Heart left ventricle (tissue), 16 donors: ENCODE measurements at regions of chr15 and their contacts with region 1.

Region 1: DNA sequence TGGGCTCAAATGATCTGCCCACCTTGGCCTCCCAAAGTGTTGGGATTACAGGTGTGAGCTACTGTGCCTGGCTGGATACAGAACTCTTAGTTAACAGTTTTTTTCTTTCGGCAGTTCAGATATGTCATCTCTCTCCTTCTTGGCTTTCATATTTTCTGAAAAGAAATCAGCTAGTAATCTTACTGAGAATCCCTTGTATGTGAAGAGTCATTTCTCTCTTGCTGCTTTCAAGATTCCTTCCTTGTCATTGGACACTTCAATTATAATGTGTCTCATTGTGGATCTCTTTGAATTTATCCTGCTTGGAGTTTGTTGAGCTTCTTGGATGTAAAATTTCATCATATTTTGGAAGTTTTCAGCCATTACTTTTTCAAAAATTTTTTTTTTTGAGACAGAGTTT is 17.0 kb downstream of the TRIM69 start:
- DNase-seq: no peak
- ATAC-seq: no peak
- H3K4me3 ChIP-seq: no peak overlapping the region
- H3K27ac ChIP-seq: no peak overlapping the region
- H3K4me1 ChIP-seq: no peaks in the 10 kb centered on the region
- H3K27me3 ChIP-seq: no peaks in the 10 kb centered on the region
- CTCF ChIP-seq: no peak
- POLR2A ChIP-seq: no peak

Region 2: GRCh38 chr15:44516436-44516835 is 236.9 kb before region 1 on chr15:
- intact Hi-C with region 1: no loop called
- DNase-seq: no peak
- ATAC-seq: no peak
- H3K4me3 ChIP-seq: no peak overlapping the region
- H3K27ac ChIP-seq: no peak overlapping the region
- H3K4me1 ChIP-seq: no peaks in the 10 kb centered on the region
- H3K27me3 ChIP-seq: no peaks in the 10 kb centered on the region
- CTCF ChIP-seq: no peak
- POLR2A ChIP-seq: no peak

Region 3: DNA sequence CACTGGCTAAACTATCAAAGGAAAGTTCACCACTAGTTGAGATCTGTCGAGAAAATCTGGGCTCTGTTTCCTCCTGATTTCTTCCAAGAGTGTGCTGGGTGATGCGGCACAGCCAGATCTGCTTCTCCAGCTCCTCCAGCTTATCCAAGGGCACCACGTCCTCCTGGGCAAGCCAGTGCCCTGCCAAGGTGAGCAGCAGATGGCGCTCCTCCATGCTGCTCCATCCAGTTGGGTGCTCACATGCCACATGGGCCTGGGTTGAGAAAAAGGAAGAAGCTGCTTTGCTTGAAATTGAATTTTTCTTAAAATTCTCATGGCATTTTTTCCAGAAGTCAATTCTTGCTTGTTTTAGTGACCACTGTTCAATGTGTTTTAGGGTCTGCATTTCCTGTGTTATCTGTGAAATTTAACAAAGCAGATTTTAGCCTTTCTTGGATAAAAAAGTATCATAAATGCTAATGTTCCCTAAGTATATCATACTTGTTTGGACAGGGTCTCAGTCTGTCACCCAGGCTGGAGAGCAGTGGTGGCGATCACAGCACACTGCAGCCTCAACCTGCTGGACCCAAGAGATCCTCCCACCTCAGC is 169.1 kb before region 1 on chr15:
- intact Hi-C with region 1: loop called in 1 of 10 experiments (anchors 10 kb)
- DNase-seq: peak in 3 of 5 donors; percentile 20 to 52 (median 46)
- ATAC-seq: peak in 3 of 4 donors; percentile 66 to 78 (median 69)
- H3K4me3 ChIP-seq: no peak overlapping the region
- H3K27ac ChIP-seq: no peak overlapping the region
- H3K4me1 ChIP-seq: no peaks in the 10 kb centered on the region
- H3K27me3 ChIP-seq: no peaks in the 10 kb centered on the region
- CTCF ChIP-seq: peak in 7 of 12 donors; percentile 27 to 55 (median 40)
- POLR2A ChIP-seq: no peak